Mucosa of descending colon (tissue), 3 donors: ENCODE measurements at regions of chr12 and their contacts with region 1.

Region 1: GRCh38 chr12:71746983-71747611 is 7.6 kb upstream of the RAB21 start:
- DNase-seq: peak in 1 of 3 donors; percentile 43
- ATAC-seq: peak; percentile 97
- H3K4me3 ChIP-seq: no peak overlapping the region
- H3K4me1 ChIP-seq: no peaks in the 10 kb centered on the region
- CTCF ChIP-seq: peak; percentile 42

Region 2: GRCh38 chr12:71415336-71416231 is 331.5 kb before region 1 on chr12:
- intact Hi-C with region 1: loop called in 1 of 2 experiments (anchors 5 kb)
- DNase-seq: peak in 1 of 3 donors; percentile 66
- ATAC-seq: peak; percentile 72
- H3K4me3 ChIP-seq: no peak overlapping the region
- H3K4me1 ChIP-seq: no peaks in the 10 kb centered on the region
- CTCF ChIP-seq: peak; percentile 33

Region 3: DNA sequence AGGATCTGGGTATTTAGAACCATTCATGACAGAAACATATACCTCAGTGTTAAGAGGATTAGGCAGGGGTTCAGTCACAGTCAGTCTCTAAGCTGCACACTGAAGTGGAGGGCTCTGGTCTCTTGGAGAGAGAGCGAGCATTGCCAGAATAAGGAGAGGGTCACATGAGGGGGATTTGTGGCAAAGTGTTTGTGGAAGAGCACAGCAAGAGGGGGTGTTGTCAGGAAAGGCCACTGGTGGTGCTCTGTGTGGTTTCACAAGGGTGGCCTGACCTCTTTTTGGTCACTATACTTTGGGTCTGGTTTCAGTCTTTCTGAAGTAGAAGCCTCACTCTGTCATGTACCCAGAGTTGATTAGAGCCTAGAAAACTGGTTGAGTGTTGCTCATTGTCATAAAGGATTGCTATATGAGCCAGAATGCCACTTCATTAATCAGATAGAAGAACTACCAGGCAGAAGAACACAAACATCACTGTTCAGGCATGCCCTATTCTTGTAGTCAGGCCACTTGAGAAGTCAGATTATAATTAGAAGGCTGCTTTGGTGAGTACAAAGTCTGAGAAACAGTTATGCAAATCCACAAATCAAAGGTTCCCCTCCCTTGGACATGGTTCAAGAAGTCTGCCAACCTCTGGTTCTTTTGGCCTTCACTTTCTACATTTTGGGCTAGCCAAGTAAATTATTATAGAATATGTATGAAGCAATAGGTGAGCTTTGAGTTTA is 52.8 kb before region 1 on chr12:
- intact Hi-C with region 1: loop called in 1 of 2 experiments (anchors 10 kb)
- DNase-seq: peak in 1 of 3 donors; percentile 65
- ATAC-seq: peak; percentile 87
- H3K4me3 ChIP-seq: no peak overlapping the region
- H3K4me1 ChIP-seq: peaks cover 29% of the 10 kb centered on the region
- CTCF ChIP-seq: no peak

Region 4: GRCh38 chr12:71888521-71888920 is 141.4 kb after region 1 on chr12:
- intact Hi-C with region 1: no loop called
- DNase-seq: no peak
- ATAC-seq: no peak
- H3K4me3 ChIP-seq: no peak overlapping the region
- H3K4me1 ChIP-seq: no peaks in the 10 kb centered on the region
- CTCF ChIP-seq: no peak

Region 5: DNA sequence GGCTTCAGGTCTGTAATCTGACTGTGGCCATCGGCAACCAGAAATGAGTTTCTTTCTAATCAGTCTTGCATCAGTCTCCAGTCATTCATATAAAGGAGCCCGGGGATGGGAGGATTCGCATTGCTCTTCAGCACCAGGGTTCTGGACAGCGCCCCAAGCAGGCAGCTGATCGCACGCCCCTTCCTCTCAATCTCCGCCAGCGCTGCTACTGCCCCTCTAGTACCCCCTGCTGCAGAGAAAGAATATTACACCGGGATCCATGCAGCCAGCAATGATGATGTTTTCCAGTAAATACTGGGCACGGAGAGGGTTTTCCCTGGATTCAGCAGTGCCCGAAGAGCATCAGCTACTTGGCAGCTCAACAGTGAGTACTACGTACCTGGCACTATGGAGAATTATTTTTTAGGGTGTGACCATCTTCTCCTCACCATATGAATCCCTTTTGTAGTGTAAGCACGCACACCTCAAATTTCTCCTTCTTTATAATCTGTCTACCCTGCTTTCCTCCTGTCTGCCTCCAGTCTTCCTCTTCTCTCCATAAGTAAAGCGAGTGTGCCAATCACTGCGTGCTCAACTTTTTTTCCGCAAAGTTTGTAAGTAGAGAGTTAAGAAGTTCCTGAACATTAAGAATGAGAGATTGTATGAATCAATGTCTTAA is 191.8 kb after region 1 on chr12 and contains the start of gene TPH2:
- intact Hi-C with region 1: no loop called
- DNase-seq: peak in 2 of 3 donors; percentile 29 to 46
- ATAC-seq: peak; percentile 60
- H3K4me3 ChIP-seq: no peak within 1 kb of the TSS
- H3K4me1 ChIP-seq: no peaks in the 10 kb centered on the region
- CTCF ChIP-seq: no peak
- total RNA-seq, gene TPH2: 0.13 TPM in 1 of 3 donors, not detected in the others

Region 6: GRCh38 chr12:72491426-72491825 is 744.3 kb after region 1 on chr12:
- intact Hi-C with region 1: no loop called
- DNase-seq: no peak
- ATAC-seq: no peak
- H3K4me3 ChIP-seq: no peak overlapping the region
- H3K4me1 ChIP-seq: no peaks in the 10 kb centered on the region
- CTCF ChIP-seq: no peak